ENCODE measurements at regions of chr7 and their contacts with region 1.

Region 1: GRCh38 chr7:39948956-39949928 is 814 bp upstream of the CDK13 start:
- DNase-seq: peak; percentile 98
- H3K4me3 ChIP-seq: peak overlapping the region; percentile 97
- H3K27ac ChIP-seq: peak overlapping the region; percentile 100
- H3K4me1 ChIP-seq: peaks cover 27% of the 10 kb centered on the region
- CTCF ChIP-seq: no peak

Region 2: GRCh38 chr7:39252916-39253315 is 696.3 kb before region 1 on chr7:
- CTCF ChIA-PET with region 1: no interaction called
- POLR2A ChIA-PET with region 1: no interaction called
- intact Hi-C with region 1: no loop called
- DNase-seq: no peak
- H3K4me3 ChIP-seq: no peak overlapping the region
- H3K27ac ChIP-seq: no peak overlapping the region
- H3K4me1 ChIP-seq: no peaks in the 10 kb centered on the region
- CTCF ChIP-seq: no peak

Region 3: GRCh38 chr7:39732837-39733804 is 216.1 kb before region 1 on chr7:
- CTCF ChIA-PET with region 1: no interaction called
- POLR2A ChIA-PET with region 1: no interaction called
- intact Hi-C with region 1: loop called (anchors 5 kb)
- DNase-seq: peak; percentile 94
- H3K4me3 ChIP-seq: peak overlapping the region; percentile 86
- H3K27ac ChIP-seq: peak overlapping the region; percentile 72
- H3K4me1 ChIP-seq: peaks cover 35% of the 10 kb centered on the region
- CTCF ChIP-seq: no peak

Region 4: DNA sequence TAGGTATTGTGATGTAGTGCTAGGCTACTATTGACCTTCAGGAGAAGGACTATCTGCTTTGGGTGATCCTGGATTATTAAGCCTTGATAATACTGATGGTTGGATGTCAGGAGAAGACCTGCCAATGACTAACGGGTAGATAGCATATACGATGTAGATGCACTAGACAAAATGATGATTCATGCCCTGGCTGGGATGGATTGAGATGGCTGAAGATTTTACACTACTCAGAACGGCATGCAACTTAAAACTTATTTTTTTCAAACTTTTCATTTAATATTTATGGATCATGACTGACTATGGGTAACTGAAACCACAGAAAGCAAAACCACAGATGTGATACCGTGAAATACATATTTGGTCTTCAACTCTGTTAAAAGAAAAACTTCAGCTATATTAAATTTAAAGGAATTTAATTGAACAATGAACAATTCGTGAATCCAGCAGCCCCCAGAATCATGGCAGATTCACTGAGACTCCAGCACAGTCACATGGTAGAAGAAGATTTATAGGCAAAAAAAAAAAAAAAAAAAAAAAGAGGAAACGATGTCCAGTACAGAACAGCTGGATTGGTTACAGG is 123.8 kb before region 1 on chr7:
- CTCF ChIA-PET with region 1: no interaction called
- POLR2A ChIA-PET with region 1: no interaction called
- intact Hi-C with region 1: no loop called
- DNase-seq: no peak
- H3K4me3 ChIP-seq: no peak overlapping the region
- H3K27ac ChIP-seq: no peak overlapping the region
- H3K4me1 ChIP-seq: no peaks in the 10 kb centered on the region
- CTCF ChIP-seq: no peak

Region 5: GRCh38 chr7:39927018-39927417 is 22.2 kb before region 1 on chr7:
- CTCF ChIA-PET with region 1: no interaction called
- POLR2A ChIA-PET with region 1: interaction called, 10 read pairs
- intact Hi-C with region 1: no loop called
- DNase-seq: no peak
- H3K4me3 ChIP-seq: no peak overlapping the region
- H3K27ac ChIP-seq: no peak overlapping the region
- H3K4me1 ChIP-seq: no peaks in the 10 kb centered on the region
- CTCF ChIP-seq: no peak

Region 6: DNA sequence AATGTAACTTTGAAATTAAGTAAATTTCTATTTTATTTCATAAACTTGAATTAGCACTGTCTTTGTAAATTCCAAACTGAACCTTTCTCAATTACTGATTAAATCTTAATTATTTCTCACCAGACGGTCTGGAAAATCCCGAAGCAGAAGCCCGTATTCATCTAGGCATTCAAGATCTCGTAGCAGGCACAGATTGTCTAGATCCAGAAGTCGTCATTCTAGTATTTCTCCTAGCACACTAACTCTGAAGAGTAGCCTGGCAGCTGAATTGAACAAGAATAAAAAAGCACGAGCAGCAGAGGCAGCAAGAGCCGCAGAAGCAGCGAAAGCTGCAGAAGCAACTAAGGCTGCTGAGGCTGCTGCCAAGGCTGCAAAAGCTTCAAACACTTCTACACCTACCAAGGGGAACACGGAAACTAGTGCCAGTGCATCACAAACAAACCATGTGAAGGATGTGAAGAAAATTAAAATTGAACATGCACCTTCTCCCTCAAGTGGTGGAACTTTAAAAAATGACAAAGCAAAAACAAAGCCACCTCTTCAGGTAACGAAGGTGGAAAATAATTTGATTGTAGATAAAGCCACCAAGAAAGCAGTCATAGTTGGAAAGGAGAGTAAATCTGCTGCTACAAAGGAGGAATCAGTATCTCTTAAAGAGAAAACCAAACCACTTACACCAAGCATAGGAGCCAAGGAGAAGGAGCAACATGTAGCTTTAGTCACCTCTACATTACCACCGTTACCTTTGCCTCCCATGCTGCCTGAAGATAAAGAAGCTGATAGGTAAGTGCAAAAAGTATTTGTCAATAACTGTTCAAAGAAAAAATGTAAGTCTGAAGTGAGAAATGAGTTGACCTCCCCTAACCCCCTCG is 38.5 kb after region 1 on chr7:
- CTCF ChIA-PET with region 1: no interaction called
- POLR2A ChIA-PET with region 1: interaction called, 3 read pairs
- intact Hi-C with region 1: loop called (anchors 5 kb)
- DNase-seq: peak; percentile 17
- H3K4me3 ChIP-seq: no peak overlapping the region
- H3K27ac ChIP-seq: peak overlapping the region; percentile 13
- H3K4me1 ChIP-seq: peaks cover 26% of the 10 kb centered on the region
- CTCF ChIP-seq: no peak

Region 7: GRCh38 chr7:40134428-40135316 is 185.4 kb after region 1 on chr7 and contains the starts of genes MPLKIP and SUGCT:
- CTCF ChIA-PET with region 1: no interaction called
- POLR2A ChIA-PET with region 1: interaction called, 3 read pairs
- intact Hi-C with region 1: loop called (anchors 1 kb)
- DNase-seq: peak; percentile 91
- H3K4me3 ChIP-seq: peak within 1 kb of the TSS; percentile 100
- H3K27ac ChIP-seq: peak within 1 kb of the TSS; percentile 89
- H3K4me1 ChIP-seq: peaks cover 18% of the 10 kb centered on the region
- CTCF ChIP-seq: peak; percentile 91
- total RNA-seq, gene MPLKIP: 35.2 and 44.1 TPM in 2 replicates
- total RNA-seq, gene SUGCT: 1.7 TPM in 1 of 2 replicates, not detected in the other

Measured in OCI-LY7 (cell line).